Ovary (tissue), 10 donors: ENCODE measurements at regions of chr5 and their contacts with region 1.

Region 1: DNA sequence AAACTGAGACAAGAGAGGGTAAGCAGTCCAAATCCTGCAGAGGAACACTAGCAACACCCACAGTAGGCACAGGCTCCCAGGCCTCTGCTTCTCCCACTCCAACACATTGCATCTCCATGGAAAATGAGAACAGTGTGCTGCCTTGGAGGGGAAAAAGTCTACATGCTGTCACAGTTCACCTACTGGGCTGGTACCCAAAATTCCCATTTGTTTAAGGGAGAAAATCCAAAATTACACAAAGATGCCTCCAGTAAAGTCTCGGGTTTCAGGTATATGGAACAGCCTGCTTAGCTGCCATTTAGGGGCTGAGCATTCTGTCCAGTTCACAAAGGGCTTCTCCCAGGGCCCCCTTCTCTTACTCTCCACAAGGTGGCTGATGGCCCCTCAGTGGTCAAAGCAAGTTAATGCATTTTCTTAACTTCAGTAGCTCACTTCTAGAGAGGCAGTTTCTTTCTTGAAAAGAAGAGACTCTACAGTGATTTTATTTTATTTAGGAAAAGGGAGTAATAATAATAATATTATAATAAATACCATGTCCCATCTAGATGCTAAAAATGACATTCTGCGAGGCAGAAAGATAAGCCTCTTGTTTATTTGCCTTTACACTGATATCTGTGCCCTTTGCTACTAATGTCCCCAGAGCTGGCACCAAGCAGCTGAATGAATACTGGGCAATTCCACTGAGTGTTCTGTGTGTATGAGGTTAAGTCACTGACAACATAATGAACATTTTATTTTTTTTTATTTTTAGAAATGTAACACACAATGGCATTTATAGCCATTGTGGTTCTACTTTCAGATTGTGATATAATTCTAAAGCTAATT is 89.4 kb downstream of the RGS7BP start:
- DNase-seq: peak in 3 of 5 donors; percentile 16 to 39 (median 18)
- H3K4me3 ChIP-seq: no peak overlapping the region
- H3K27ac ChIP-seq: no peak overlapping the region
- H3K4me1 ChIP-seq: peaks cover 1% of the 10 kb centered on the region
- H3K27me3 ChIP-seq: no peaks in the 10 kb centered on the region
- CTCF ChIP-seq: peak in 1 of 3 donors; percentile 22
- EP300 ChIP-seq: no peak
- POLR2A ChIP-seq: no peak

Region 2: DNA sequence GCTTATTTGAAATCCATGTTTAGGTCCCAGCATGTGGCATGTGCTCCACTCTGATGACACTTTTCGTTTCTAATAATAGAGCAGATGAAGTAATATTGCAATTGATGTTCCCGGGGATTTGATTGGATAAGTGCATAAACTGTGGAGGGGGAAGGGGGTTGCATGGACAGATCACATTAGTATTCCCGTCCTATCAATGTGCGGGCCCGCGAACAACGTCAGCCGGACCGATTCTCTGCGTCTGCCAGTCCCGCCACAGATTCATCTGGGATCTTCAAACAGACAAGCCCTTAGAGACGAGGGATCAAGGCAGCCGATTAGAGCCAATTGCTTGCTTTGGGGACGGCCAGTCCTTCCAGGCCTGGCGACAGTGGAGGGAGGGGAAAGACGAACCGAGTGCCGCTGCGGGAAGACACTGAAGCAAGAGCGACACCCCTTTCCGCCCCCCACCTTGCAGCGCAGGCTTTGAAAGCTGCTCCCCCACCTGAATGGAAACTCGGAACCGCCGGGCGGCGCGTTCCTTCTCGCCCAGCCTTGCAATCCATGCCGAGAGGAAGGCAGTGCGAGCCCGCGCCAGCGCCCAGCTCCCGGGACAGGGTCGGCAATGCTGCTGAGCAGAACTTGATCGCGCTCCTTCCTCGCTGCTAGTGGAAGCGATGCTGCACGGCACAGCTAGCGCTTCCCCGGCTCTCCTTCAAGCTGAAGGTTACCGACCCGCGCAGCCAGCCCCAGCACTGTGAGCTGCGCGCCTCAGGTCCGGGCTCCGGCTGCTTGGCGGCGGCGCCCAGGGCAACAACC is 89.3 kb before region 1 on chr5 and contains the start of gene RGS7BP:
- intact Hi-C with region 1: loop called in 1 of 4 experiments (anchors 5 kb)
- DNase-seq: peak; percentile 13 to 69 (median 44)
- H3K4me3 ChIP-seq: peak within 1 kb of the TSS; percentile 38
- H3K27ac ChIP-seq: no peak within 1 kb of the TSS
- H3K4me1 ChIP-seq: peaks cover 1% of the 10 kb centered on the region
- H3K27me3 ChIP-seq: no peaks in the 10 kb centered on the region
- CTCF ChIP-seq: peak in 2 of 3 donors; percentile 6 to 26
- EP300 ChIP-seq: no peak
- POLR2A ChIP-seq: no peak
- total RNA-seq, gene RGS7BP: 1.4 to 6.5 (median 4.3) TPM